Natural killer cell (primary cell): ENCODE measurements at regions of chr2 and their contacts with region 1.

Region 1: DNA sequence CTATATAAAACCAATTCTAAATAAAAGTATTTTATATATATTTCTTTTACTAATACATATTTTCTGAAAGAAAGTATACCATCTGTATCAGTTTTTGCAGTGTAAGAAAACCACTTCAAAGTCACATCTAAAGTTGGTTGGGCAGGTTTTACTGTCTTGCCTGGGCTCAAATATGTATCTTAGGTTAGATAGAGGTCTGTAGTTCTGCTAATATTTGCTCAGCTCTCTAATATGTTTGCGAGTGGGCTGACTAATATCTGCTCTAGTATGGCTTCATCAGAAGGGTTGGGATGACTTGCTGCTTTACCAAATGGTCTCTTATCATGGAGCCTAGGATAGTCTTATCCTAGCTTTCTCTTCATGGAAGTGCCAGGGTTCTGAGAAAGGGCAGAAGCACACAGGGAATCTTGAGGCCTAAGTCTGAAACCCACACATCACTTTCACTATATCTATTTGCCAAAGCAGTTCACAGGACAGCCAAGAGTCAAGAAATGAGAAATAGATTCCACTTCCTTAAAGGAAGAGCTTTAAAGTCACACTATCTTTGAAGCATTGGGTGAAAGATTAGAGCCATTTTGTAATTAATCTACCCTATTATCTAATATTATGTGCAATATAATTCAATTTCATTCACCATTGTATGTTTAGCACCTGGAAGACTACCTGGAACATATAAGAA is 610.0 kb downstream of the KCNJ3 start:
- DNase-seq: no peak
- ATAC-seq: no peak
- H3K4me3 ChIP-seq: no peak overlapping the region
- H3K4me3 Mint-ChIP-seq: no peak overlapping the region
- H3K27ac ChIP-seq: no peak overlapping the region
- H3K27ac Mint-ChIP-seq: no peak overlapping the region
- H3K4me1 ChIP-seq: no peaks in the 10 kb centered on the region
- H3K4me1 Mint-ChIP-seq: no peaks in the 10 kb centered on the region
- H3K27me3 ChIP-seq: no peaks in the 10 kb centered on the region
- H3K27me3 Mint-ChIP-seq: no peaks in the 10 kb centered on the region
- CTCF ChIP-seq: no peak

Region 2: DNA sequence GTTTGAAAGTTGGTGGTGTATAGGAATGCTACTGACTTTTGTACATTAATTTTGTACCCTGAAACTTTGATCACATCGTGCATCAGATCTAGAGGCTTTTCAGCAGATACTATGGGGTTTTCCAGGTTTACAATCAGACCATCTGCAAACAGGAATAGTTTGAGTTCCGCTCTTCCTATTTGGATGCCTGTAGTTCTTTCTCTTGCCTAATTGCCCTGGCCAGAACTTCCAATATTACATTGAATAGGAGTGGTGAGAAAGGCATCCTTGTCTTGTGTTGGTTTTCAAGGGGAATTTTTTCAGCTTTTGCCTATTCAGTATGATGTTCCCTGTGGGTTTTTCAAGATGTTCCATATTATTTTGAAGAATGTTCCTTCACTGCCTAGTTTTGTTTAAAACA is 23.5 kb after region 1 on chr2:
- intact Hi-C with region 1: loop called (anchors 1 kb)
- DNase-seq: no peak
- ATAC-seq: no peak
- H3K4me3 ChIP-seq: no peak overlapping the region
- H3K4me3 Mint-ChIP-seq: no peak overlapping the region
- H3K27ac ChIP-seq: no peak overlapping the region
- H3K27ac Mint-ChIP-seq: no peak overlapping the region
- H3K4me1 ChIP-seq: no peaks in the 10 kb centered on the region
- H3K4me1 Mint-ChIP-seq: no peaks in the 10 kb centered on the region
- H3K27me3 ChIP-seq: no peaks in the 10 kb centered on the region
- H3K27me3 Mint-ChIP-seq: no peaks in the 10 kb centered on the region
- CTCF ChIP-seq: no peak